A549 (cell line): ENCODE measurements at regions of chr10 and their contacts with region 1.

Region 1: GRCh38 chr10:69716711-69717560 is 84.8 kb upstream of the COL13A1 start:
- DNase-seq: peak; percentile 58 to 84
- ATAC-seq: peak; percentile 84 to 95
- H3K4me3 ChIP-seq: no peak overlapping the region
- H3K27ac ChIP-seq: no peak overlapping the region
- H3K4me1 ChIP-seq: no peaks in the 10 kb centered on the region
- CTCF ChIP-seq: peak; percentile 83
- EP300 ChIP-seq: no peak
- POLR2A ChIP-seq: no peak
- RAD21 ChIP-seq: peak; percentile 81 to 89

Region 2: DNA sequence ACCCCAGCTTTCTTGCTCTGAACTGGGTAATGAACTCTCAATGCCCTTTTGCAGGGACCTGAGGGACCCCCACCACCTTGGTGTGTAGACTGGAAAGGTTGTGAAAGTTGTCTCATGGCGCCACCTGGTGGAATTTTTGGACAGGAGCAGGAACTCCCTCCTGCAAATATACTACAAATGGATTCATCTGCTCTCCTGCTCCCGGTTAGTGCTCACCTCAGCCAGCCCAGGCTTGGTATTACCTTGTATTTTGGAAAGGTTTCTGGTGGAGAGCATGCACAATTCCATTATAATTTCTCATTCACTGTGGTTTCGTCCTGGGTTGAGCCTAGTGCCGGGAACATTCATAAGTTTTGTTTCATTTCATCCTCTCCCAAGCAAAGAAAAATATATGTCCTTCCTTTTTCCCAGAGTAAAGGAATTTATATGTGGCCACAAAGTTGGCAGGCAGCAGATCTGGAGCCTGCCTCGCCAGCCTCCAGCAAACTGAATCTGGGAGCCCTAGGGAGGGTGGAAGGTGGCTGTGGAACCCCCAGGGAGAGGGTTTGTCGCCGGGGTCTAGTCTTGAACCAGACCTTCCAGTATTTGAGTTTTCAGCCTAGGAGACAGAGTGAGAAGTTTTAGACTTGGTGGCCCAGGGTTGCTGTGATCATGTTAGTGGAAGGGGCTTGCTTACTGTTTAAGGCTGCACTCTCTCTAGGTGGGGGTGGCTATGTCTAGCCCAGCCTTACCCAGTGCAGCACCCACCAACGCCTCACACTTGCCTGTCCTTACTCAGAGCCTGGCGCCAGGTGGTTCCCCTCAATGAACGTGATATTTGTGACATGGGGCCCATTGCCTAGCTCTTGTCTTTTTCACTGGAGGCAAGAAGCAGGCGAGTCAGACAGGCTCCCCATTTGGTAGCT is 77.4 kb before region 1 on chr10:
- CTCF ChIA-PET with region 1: interaction called, 153 read pairs
- POLR2A ChIA-PET with region 1: no interaction called
- DNase-seq: peak; percentile 73 to 80
- ATAC-seq: peak; percentile 58 to 84
- H3K4me3 ChIP-seq: no peak overlapping the region
- H3K27ac ChIP-seq: no peak overlapping the region
- H3K4me1 ChIP-seq: no peaks in the 10 kb centered on the region
- CTCF ChIP-seq: peak; percentile 95
- EP300 ChIP-seq: no peak
- POLR2A ChIP-seq: no peak
- RAD21 ChIP-seq: peak; percentile 93

Region 3: GRCh38 chr10:69663369-69663947 is 53.5 kb before region 1 on chr10:
- CTCF ChIA-PET with region 1: interaction called, 11 read pairs
- POLR2A ChIA-PET with region 1: no interaction called
- DNase-seq: peak in 1 of 2 experiments; percentile 58
- ATAC-seq: peak; percentile 21 to 70; a peak in 4 of 6 replicates
- H3K4me3 ChIP-seq: no peak overlapping the region
- H3K27ac ChIP-seq: no peak overlapping the region
- H3K4me1 ChIP-seq: no peaks in the 10 kb centered on the region
- CTCF ChIP-seq: no peak
- EP300 ChIP-seq: no peak
- POLR2A ChIP-seq: no peak
- RAD21 ChIP-seq: no peak

Region 4: GRCh38 chr10:69696073-69696731 is 20.7 kb before region 1 on chr10:
- CTCF ChIA-PET with region 1: interaction called, 41 read pairs
- POLR2A ChIA-PET with region 1: no interaction called
- DNase-seq: peak; percentile 84 to 90
- ATAC-seq: peak; percentile 94
- H3K4me3 ChIP-seq: no peak overlapping the region
- H3K27ac ChIP-seq: no peak overlapping the region
- H3K4me1 ChIP-seq: 0 out of 3 replicates have a peak, but pooled peaks cover 3% of the 10 kb centered on the region
- CTCF ChIP-seq: peak; percentile 83
- EP300 ChIP-seq: no peak
- POLR2A ChIP-seq: no peak
- RAD21 ChIP-seq: peak; percentile 62 to 67